ENCODE measurements at regions of chr16 and their contacts with region 1.

Region 1: GRCh38 chr16:70508752-70509151 is 14.6 kb downstream of the COG4 start:
- DNase-seq: no peak
- H3K4me3 ChIP-seq: no peak overlapping the region
- H3K27ac ChIP-seq: no peak overlapping the region
- H3K4me1 ChIP-seq: no peaks in the 10 kb centered on the region
- H3K27me3 ChIP-seq: no peaks in the 10 kb centered on the region
- CTCF ChIP-seq: peak; percentile 45; the same call in 1 of the 2 replicates

Region 2: DNA sequence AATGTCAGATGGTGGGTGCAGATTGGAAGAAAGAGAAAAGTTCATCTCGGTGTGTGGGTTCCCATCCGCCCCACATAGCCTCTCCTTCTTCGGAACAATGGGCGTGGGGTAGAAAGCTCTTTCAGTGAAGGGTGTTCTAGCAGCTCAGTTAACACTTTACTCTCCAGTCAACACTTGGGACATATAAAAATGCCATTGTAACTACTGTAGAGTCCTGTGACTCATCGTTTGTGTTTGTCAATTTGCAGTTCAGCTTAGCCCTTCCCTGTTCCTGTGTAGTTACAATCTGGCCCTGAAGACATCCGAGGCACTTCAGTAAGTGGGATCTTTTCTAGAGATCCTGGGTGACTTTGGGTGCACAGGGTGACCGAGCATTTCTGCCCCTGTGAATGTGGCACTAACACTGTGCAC is 346.7 kb before region 1 on chr16:
- CTCF ChIA-PET with region 1: no interaction called
- POLR2A ChIA-PET with region 1: no interaction called
- intact Hi-C with region 1: no loop called
- DNase-seq: peak in 1 of 2 experiments; percentile 73
- H3K4me3 ChIP-seq: no peak overlapping the region
- H3K27ac ChIP-seq: 0 out of 2 replicates have a peak overlapping the region, but pooled peaks have one; percentile 0
- H3K4me1 ChIP-seq: peaks cover 8% of the 10 kb centered on the region
- H3K27me3 ChIP-seq: no peaks in the 10 kb centered on the region
- CTCF ChIP-seq: no peak

Region 3: DNA sequence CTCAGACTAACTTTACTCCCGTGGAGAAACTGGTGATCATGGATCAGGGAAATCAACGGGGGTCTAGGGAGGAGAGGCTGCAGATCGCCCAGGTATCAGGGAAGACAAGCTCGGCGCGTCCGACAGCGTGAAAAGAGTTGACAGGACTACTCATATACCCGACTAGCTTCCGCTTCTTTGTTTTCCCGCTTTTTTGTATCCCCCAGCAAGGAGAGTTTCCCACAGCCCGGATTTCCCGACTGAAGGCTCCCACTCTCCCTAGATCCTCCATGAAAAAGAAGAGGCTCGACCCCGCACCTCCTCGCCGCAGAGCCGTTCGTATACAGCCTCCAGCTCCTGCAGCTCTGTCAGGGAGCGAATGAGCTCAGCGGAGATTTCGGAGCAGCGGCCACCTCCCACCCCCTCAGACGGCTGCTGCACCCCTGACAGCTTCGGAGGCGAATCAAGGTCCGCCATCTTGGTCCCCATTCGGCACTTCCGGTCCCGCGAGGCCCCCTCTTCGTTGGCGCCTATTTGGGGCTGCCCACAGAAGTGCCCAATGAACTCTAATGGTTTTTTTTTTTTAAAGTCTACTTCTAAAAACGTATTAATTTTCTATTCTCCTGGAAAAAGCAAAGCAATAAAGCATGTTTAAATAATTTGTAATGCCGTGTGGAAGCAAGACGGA is 14.5 kb after region 1 on chr16 and contains the start of gene COG4:
- CTCF ChIA-PET with region 1: no interaction called
- POLR2A ChIA-PET with region 1: interaction called, 11 read pairs
- intact Hi-C with region 1: no loop called
- DNase-seq: peak; percentile 66 to 82
- H3K4me3 ChIP-seq: peak within 1 kb of the TSS; percentile 99
- H3K27ac ChIP-seq: peak within 1 kb of the TSS; percentile 88
- H3K4me1 ChIP-seq: peaks cover 35% of the 10 kb centered on the region
- H3K27me3 ChIP-seq: no peaks in the 10 kb centered on the region
- CTCF ChIP-seq: no peak
- total RNA-seq, gene COG4: 54.2 and 61.1 TPM in 2 replicates

Region 4: GRCh38 chr16:70548936-70549335 is 40.2 kb after region 1 on chr16:
- CTCF ChIA-PET with region 1: no interaction called
- POLR2A ChIA-PET with region 1: interaction called, 14 read pairs
- intact Hi-C with region 1: no loop called
- DNase-seq: peak in 1 of 2 experiments; percentile 72
- H3K4me3 ChIP-seq: no peak overlapping the region
- H3K27ac ChIP-seq: peak overlapping the region; percentile 64
- H3K4me1 ChIP-seq: peaks cover 40% of the 10 kb centered on the region
- H3K27me3 ChIP-seq: no peaks in the 10 kb centered on the region
- CTCF ChIP-seq: no peak

Region 5: GRCh38 chr16:71230122-71230845 is 721.5 kb after region 1 on chr16 and contains the start of gene HYDIN:
- CTCF ChIA-PET with region 1: no interaction called
- POLR2A ChIA-PET with region 1: no interaction called
- intact Hi-C with region 1: no loop called
- DNase-seq: peak; percentile 83 to 90
- H3K4me3 ChIP-seq: peak within 1 kb of the TSS; percentile 81
- H3K27ac ChIP-seq: no peak within 1 kb of the TSS
- H3K4me1 ChIP-seq: peaks cover 6% of the 10 kb centered on the region
- H3K27me3 ChIP-seq: no peaks in the 10 kb centered on the region
- CTCF ChIP-seq: no peak
- total RNA-seq, gene HYDIN: 25.9 and 31.0 TPM in 2 replicates

Measured in PC-9 (cell line).